ENCODE measurements at regions of chr7 and their contacts with region 1.

Region 1: GRCh38 chr7:151448261-151449252 is 8.6 kb upstream of the CRYGN start:
- DNase-seq: peak; percentile 78 to 91
- ATAC-seq: peak; percentile 92
- H3K4me3 ChIP-seq: peak overlapping the region; percentile 36 to 73
- H3K27ac ChIP-seq: peak overlapping the region in 1 of 2 donors; percentile 42
- H3K4me1 ChIP-seq: no peaks in the 10 kb centered on the region
- H3K27me3 ChIP-seq: no peaks in the 10 kb centered on the region

Region 2: GRCh38 chr7:151315038-151315655 is 133.4 kb before region 1 on chr7:
- intact Hi-C with region 1: loop called (anchors 2 to 5 kb)
- DNase-seq: peak in 1 of 2 donors; percentile 71
- ATAC-seq: peak; percentile 90
- H3K4me3 ChIP-seq: no peak overlapping the region
- H3K27ac ChIP-seq: no peak overlapping the region
- H3K4me1 ChIP-seq: no peaks in the 10 kb centered on the region
- H3K27me3 ChIP-seq: no peaks in the 10 kb centered on the region

Region 3: GRCh38 chr7:151368136-151368571 is 80.4 kb before region 1 on chr7:
- intact Hi-C with region 1: loop called (anchors 1 kb)
- DNase-seq: peak; percentile 88 to 93
- ATAC-seq: peak; percentile 93
- H3K4me3 ChIP-seq: no peak overlapping the region
- H3K27ac ChIP-seq: no peak overlapping the region
- H3K4me1 ChIP-seq: peaks cover 0 to 7% of the 10 kb centered on the region in 2 donors
- H3K27me3 ChIP-seq: no peaks in the 10 kb centered on the region